Activated CD8-positive, alpha-beta memory T cell treated with anti-CD3 and anti-CD28 coated beads, Interleukin-2, amount 10 ng/mL, durations not matched to agents 7 days and 5 days (primary cell): ENCODE measurements at regions of chr14 and their contacts with region 1.

Region 1: DNA sequence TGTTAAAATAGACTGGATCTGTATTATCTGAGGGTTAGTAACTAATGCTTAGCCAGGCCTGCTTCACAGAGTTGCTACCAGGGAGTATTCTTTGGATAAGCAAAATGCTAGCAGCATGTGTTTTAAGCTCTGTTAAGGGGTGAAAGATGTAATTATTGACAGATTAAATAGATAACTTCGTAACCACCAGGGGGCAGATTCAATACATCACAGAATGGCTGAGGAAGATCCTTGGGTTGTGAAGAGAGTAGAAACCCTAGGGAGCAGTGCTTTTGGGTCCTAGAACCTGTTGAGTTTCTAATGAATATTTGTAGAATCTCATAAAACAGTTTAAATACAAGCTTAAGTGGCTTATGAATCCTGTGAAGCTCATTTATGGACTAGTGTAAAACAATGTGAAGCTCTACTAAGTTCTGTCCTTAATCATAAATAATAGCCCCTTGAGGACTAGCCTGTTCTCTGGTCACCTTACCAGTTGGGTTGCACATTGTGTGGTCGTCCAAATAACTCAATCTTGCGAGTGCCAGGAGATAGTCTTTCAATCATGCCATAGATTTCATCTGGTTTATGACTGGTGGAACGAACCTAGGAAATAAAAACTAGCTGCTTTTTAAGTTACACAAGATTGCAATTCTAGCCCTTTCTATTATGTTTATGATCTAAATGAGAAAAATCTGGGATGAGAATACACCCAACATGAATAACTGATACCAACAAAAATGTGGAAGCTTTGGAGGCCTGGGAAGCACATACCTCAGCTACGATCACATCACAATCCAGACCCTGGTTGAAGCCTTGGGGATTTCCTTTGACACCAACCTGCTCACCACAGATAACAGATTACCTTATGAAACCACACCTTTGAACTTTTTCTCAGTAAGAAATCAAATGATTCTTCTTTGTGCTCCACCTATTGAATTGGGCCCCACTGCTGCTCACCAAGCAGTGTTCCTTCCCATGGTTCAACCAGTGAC is 12.3 kb downstream of the METTL3 start:
- DNase-seq: no peak
- ATAC-seq: peak; percentile 75
- H3K4me3 Mint-ChIP-seq: no peak overlapping the region
- H3K27ac Mint-ChIP-seq: peak overlapping the region; percentile 62
- H3K4me1 Mint-ChIP-seq: peaks cover 30% of the 10 kb centered on the region
- H3K27me3 Mint-ChIP-seq: no peaks in the 10 kb centered on the region

Region 2: GRCh38 chr14:21419528-21419927 is 79.3 kb before region 1 on chr14:
- CTCF ChIA-PET with region 1: no interaction called
- DNase-seq: no peak
- ATAC-seq: no peak
- H3K4me3 Mint-ChIP-seq: no peak overlapping the region
- H3K27ac Mint-ChIP-seq: no peak overlapping the region
- H3K4me1 Mint-ChIP-seq: peaks cover 12% of the 10 kb centered on the region
- H3K27me3 Mint-ChIP-seq: no peaks in the 10 kb centered on the region

Region 3: DNA sequence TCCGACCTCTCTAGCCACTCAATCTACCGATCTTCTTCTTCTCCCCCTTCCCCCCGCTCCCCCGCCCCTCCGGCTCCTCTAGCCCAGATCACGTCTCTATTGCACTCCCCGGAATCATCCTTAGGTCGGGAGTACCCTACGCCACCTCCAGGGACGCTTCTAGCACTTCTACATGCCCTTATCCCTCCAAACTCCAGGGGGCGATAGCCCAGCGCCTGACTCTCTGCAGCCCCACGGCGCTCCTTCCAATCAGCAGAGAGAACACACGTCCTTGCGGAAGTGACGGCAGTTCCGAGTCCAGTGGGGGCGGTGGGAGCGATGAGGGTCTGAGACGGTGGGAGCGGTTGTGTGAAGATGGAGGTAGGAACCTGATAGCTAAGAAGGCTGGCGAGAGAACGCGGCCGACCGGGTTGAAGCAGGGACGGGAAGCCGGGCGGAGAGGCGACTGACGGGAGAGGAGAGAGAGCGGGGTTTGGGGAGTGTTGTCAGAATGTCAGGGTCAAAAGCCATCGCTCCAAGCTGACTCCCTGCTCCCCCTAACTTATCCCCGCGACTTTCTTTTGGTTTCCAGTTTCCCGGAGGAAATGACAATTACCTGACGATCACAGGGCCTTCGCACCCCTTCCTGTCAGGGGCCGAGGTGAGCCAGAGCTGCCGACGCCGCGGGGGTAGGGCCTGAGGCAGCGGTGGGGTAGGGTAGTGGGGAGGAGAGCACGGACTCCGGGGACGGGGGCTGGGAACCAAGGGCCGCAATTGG is 21.7 kb before region 1 on chr14 and contains the starts of genes RAB2B and TOX4:
- CTCF ChIA-PET with region 1: interaction called, 29 read pairs
- DNase-seq: peak; percentile 97
- ATAC-seq: peak; percentile 98
- H3K4me3 Mint-ChIP-seq: peak within 1 kb of the TSS; percentile 99
- H3K27ac Mint-ChIP-seq: peak within 1 kb of the TSS; percentile 100
- H3K4me1 Mint-ChIP-seq: peaks cover 38% of the 10 kb centered on the region
- H3K27me3 Mint-ChIP-seq: no peaks in the 10 kb centered on the region
- total RNA-seq, gene RAB2B: 26.1 to 28.2 TPM
- total RNA-seq, gene TOX4: 72.7 to 87.1 TPM

Region 4: DNA sequence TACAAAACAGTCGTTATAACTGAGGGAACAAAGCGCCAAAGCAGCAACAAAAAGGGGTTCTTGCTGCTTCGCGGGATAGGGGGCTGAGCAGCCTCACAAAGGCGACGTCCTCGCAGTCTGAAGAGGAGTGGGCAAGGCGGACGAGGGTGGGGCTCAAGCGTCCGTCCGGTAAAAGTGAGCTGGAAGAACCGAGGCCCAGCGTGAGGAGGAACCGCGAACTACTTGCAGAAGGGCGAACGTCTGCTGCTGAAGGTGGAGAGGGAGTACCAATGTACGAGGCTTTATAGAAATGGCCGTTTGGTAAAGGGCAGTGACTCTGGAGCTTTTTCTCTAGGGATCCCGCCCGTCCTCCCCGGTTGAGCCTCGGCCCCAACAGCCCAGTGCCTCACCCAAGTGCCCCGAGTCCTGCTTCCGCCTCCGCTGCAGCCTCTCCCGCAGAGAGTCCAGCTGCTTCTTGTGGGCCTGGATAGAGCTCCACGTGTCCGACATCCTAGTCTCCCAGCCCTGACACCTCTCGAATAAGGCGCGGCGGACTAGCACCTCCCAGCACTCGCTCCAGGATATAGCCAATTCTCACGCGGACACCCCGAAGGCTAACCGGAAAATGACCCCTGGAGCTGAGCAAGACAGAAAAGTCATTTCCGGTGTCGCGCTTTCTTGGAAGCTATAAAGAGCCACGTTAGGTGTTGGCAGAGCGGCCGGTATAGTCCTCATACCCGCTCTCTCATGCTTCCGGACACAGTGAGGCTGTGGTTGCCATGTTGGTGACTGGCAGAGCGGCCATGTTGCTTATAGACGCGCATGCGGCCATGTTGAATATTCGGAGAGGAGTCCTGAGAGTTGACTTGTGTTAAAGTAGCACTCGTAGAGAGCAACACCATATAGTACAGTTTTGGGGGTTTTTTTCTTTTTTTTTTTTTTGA is 12.2 kb after region 1 on chr14 and contains the start of gene METTL3:
- CTCF ChIA-PET with region 1: interaction called, 45 read pairs
- DNase-seq: peak; percentile 97
- ATAC-seq: peak; percentile 99
- H3K4me3 Mint-ChIP-seq: peak within 1 kb of the TSS; percentile 96
- H3K27ac Mint-ChIP-seq: peak within 1 kb of the TSS; percentile 98
- H3K4me1 Mint-ChIP-seq: peaks cover 38% of the 10 kb centered on the region
- H3K27me3 Mint-ChIP-seq: no peaks in the 10 kb centered on the region
- total RNA-seq, gene METTL3: 93.5 to 94.1 TPM

Region 5: GRCh38 chr14:21525962-21526671 is 27.3 kb after region 1 on chr14 and contains the start of gene SALL2:
- CTCF ChIA-PET with region 1: interaction called, 13 read pairs
- DNase-seq: peak; percentile 66
- ATAC-seq: peak; percentile 87
- H3K4me3 Mint-ChIP-seq: peak within 1 kb of the TSS; percentile 70
- H3K27ac Mint-ChIP-seq: no peak within 1 kb of the TSS
- H3K4me1 Mint-ChIP-seq: peaks cover 9% of the 10 kb centered on the region
- H3K27me3 Mint-ChIP-seq: peaks cover 11% of the 10 kb centered on the region
- total RNA-seq, gene SALL2: 1.3 to 1.5 TPM

Region 6: DNA sequence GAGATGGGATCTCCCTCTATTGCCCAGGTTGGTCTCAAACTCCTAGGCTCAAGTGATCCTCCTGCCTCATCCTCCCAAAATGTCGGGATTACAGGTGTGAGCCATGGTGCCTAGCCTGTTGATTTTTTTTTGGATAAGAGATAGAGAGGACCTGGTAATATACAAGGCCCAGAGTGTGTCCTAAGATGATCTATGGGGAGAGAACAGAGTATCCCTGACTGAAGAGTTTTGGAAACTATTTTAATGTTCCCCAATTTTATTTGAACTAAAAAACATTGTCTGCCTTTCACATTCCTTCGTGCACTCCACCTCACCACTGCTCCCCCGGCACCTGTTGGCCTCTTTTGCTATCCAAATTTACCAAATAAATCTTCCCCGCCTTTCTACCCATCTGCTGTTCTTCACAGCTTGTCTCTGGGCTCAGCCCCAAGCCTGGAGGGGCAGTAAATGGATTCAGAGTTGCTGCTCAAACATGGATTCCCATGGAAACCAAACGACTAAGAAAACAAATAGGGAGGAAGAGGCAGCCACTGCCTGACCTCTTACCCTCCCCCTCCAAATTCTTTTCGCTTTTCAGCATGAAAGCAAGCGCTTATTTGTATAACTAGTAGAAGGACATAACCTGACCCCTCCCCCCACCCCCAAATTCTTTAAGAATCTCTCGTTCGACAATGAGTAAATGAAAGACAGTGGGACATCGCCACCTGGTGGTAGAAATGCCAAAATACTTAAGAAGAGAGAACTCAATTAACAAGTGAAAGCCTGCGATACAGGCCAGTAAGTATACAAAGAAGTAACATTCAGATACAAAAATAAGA is 58.5 kb after region 1 on chr14:
- CTCF ChIA-PET with region 1: interaction called, 49 read pairs
- DNase-seq: peak; percentile 83
- ATAC-seq: peak; percentile 58
- H3K4me3 Mint-ChIP-seq: peak overlapping the region; percentile 32
- H3K27ac Mint-ChIP-seq: peak overlapping the region; percentile 56
- H3K4me1 Mint-ChIP-seq: peaks cover 6% of the 10 kb centered on the region
- H3K27me3 Mint-ChIP-seq: no peaks in the 10 kb centered on the region